ENCODE measurements at regions of chr20 and their contacts with region 1.

Region 1: GRCh38 chr20:23086056-23086566 is at the start of gene CD93:
- H3K4me3 Mint-ChIP-seq: peak within 1 kb of the TSS; percentile 79
- H3K27ac Mint-ChIP-seq: peak within 1 kb of the TSS; percentile 98
- H3K4me1 Mint-ChIP-seq: peaks cover 90% of the 10 kb centered on the region
- H3K27me3 Mint-ChIP-seq: no peaks in the 10 kb centered on the region

Region 2: GRCh38 chr20:22986601-22987000 is 99.5 kb before region 1 on chr20:
- intact Hi-C with region 1: no loop called
- H3K4me3 Mint-ChIP-seq: no peak overlapping the region
- H3K27ac Mint-ChIP-seq: no peak overlapping the region
- H3K4me1 Mint-ChIP-seq: peaks cover 34% of the 10 kb centered on the region
- H3K27me3 Mint-ChIP-seq: peaks cover 57% of the 10 kb centered on the region

Region 3: GRCh38 chr20:23103284-23104035 is 17.3 kb after region 1 on chr20:
- intact Hi-C with region 1: loop called (anchors 2 kb)
- H3K4me3 Mint-ChIP-seq: no peak overlapping the region
- H3K27ac Mint-ChIP-seq: peak overlapping the region; percentile 82
- H3K4me1 Mint-ChIP-seq: peaks cover 79% of the 10 kb centered on the region
- H3K27me3 Mint-ChIP-seq: no peaks in the 10 kb centered on the region

Region 4: GRCh38 chr20:23116311-23117089 is 30.4 kb after region 1 on chr20:
- intact Hi-C with region 1: loop called (anchors 5 kb)
- H3K4me3 Mint-ChIP-seq: peak overlapping the region; percentile 53
- H3K27ac Mint-ChIP-seq: peak overlapping the region; percentile 81
- H3K4me1 Mint-ChIP-seq: peaks cover 94% of the 10 kb centered on the region
- H3K27me3 Mint-ChIP-seq: peaks cover 5% of the 10 kb centered on the region

Region 5: GRCh38 chr20:23132930-23133559 is 46.9 kb after region 1 on chr20:
- intact Hi-C with region 1: loop called (anchors 5 kb)
- H3K4me3 Mint-ChIP-seq: no peak overlapping the region
- H3K27ac Mint-ChIP-seq: peak overlapping the region; percentile 98
- H3K4me1 Mint-ChIP-seq: peaks cover 87% of the 10 kb centered on the region
- H3K27me3 Mint-ChIP-seq: no peaks in the 10 kb centered on the region

Region 6: GRCh38 chr20:23147964-23148730 is 62.0 kb after region 1 on chr20:
- intact Hi-C with region 1: loop called (anchors 5 kb)
- H3K4me3 Mint-ChIP-seq: peak overlapping the region; percentile 45
- H3K27ac Mint-ChIP-seq: peak overlapping the region; percentile 88
- H3K4me1 Mint-ChIP-seq: peaks cover 97% of the 10 kb centered on the region
- H3K27me3 Mint-ChIP-seq: no peaks in the 10 kb centered on the region

Region 7: GRCh38 chr20:23205611-23206041 is 119.5 kb after region 1 on chr20:
- intact Hi-C with region 1: no loop called
- H3K4me3 Mint-ChIP-seq: no peak overlapping the region
- H3K27ac Mint-ChIP-seq: no peak overlapping the region
- H3K4me1 Mint-ChIP-seq: peaks cover 45% of the 10 kb centered on the region
- H3K27me3 Mint-ChIP-seq: peaks cover 27% of the 10 kb centered on the region

Region 8: GRCh38 chr20:23562721-23563342 is 476.7 kb after region 1 on chr20:
- intact Hi-C with region 1: no loop called
- H3K4me3 Mint-ChIP-seq: no peak overlapping the region
- H3K27ac Mint-ChIP-seq: no peak overlapping the region
- H3K4me1 Mint-ChIP-seq: no peaks in the 10 kb centered on the region
- H3K27me3 Mint-ChIP-seq: peaks cover 14% of the 10 kb centered on the region